Spleen (tissue), 13 donors: ENCODE measurements at regions of chr18 and their contacts with region 1.

Region 1: DNA sequence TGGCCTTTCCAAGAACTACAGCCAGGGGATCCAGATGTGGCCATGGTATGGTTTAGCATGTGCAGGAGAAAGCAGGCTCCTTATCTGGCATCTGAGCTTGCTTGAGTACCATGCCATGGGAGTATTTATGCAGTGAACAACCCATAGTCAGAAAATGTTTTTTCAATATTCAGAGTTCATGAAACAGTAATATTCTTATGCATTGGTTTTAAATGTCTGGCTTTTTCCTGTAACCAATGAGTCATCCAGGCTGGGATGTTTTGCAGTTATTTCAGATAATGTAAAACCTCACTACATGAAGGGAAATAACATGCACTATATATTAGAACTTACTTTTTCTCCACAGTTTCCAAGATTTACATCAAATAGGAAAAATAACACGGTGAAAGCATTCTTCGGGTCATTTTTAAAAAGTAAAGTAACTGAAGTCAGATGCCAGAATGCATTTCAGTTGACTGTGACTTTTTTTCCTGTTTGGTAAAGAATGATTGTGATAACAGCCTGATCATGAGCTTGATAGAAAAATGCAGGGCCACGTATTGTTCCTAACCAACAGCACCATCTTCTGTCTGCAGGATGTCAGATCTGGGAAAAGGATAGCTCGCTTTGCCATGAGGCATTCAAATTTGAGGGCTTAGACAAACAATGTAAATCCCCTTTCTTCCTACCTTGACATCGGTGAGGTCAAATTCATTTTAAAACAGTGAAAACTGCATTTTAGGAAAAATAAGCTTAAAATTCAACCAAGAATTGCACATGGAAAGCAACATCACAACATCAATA is 152.8 kb downstream of the DSC3 start:
- DNase-seq: no peak
- H3K4me3 ChIP-seq: no peak overlapping the region
- H3K27ac ChIP-seq: no peak overlapping the region
- H3K4me1 ChIP-seq: no peaks in the 10 kb centered on the region
- H3K27me3 ChIP-seq: no peaks in the 10 kb centered on the region
- CTCF ChIP-seq: peak in 3 of 11 experiments; percentile 14 to 30 (median 27)
- POLR2A ChIP-seq: no peak

Region 2: GRCh38 chr18:30676053-30676480 is 213.6 kb before region 1 on chr18:
- intact Hi-C with region 1: no loop called
- DNase-seq: no peak
- H3K4me3 ChIP-seq: no peak overlapping the region
- H3K27ac ChIP-seq: no peak overlapping the region
- H3K4me1 ChIP-seq: no peaks in the 10 kb centered on the region
- H3K27me3 ChIP-seq: no peaks in the 10 kb centered on the region
- CTCF ChIP-seq: no peak
- POLR2A ChIP-seq: no peak

Region 3: DNA sequence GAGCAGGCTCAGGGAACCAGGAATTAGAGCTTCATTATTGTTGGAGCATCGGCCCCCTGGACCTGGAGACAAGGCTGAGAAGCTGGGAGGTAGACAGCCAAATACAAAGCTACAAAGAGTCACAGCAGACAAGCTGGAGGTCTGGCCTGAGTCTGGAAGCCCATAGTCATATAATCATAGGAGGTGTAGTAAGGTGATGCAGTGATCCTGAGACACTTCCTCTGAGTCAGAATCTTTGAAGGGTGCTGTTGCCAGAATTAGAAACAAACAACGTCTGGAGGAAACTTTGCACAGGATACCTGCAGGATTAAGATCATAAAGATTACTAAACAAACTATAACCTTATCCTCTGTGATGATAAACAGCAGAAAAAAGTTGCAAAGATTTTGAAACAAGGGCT is 61.0 kb before region 1 on chr18:
- intact Hi-C with region 1: loop called (anchors 10 kb)
- DNase-seq: no peak
- H3K4me3 ChIP-seq: no peak overlapping the region
- H3K27ac ChIP-seq: no peak overlapping the region
- H3K4me1 ChIP-seq: no peaks in the 10 kb centered on the region
- H3K27me3 ChIP-seq: no peaks in the 10 kb centered on the region
- CTCF ChIP-seq: no peak
- POLR2A ChIP-seq: no peak

Region 4: DNA sequence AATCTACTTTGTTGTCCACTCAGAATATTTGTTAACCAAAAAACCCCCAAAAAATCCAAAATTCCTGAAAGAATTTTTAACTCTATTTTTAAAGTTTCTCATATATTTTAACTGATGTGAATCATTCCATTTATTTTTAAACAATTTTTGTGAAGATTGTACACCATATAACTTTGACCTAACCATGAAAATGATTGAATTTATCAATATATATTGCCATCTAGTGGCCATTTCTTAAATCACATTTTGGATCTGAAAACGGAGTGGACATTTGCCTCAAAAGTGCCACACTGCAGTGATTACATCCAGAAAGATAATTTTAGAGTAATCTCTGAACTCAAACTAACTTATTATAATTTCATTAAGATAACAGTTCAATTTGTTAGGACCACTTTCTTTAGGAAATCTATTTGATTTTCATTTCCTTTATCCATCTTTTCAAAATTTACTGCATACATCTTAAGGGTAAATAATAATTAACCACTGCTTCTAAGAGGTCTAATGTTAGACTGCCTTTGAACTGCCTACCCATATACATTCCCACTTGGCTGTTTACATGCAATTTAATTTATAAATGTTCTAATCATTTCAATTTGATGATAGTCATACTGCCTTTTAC is 81.7 kb after region 1 on chr18:
- intact Hi-C with region 1: no loop called
- DNase-seq: no peak
- H3K4me3 ChIP-seq: no peak overlapping the region
- H3K27ac ChIP-seq: no peak overlapping the region
- H3K4me1 ChIP-seq: no peaks in the 10 kb centered on the region
- H3K27me3 ChIP-seq: no peaks in the 10 kb centered on the region
- CTCF ChIP-seq: peak in 9 of 11 experiments; percentile 27 to 67 (median 56)
- POLR2A ChIP-seq: no peak